ENCODE measurements at regions of chr14 and their contacts with region 1.

Region 1: DNA sequence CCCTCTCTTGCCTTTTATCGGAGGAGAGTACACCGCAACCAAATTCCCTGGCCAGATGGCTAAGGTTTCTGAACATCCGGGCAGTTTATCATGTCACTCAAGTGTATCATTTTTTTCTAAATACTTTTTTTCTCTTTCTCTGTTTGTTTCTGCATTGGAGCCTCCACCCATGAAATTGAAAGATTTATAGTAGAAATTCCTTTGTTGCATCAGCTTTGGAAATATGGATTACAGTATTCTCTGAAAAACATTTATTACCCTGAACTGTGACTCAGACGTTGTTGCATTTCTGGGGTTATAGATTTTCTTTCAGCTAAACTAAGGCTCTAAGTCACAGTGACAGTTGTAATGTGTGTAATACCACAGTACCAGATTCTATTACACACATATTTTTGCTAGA is 187.0 kb downstream of the SPTSSA start:
- DNase-seq: no peak
- ATAC-seq: no peak
- H3K4me3 ChIP-seq: no peak overlapping the region
- H3K27ac ChIP-seq: no peak overlapping the region
- H3K4me1 ChIP-seq: no peaks in the 10 kb centered on the region
- H3K27me3 ChIP-seq: no peaks in the 10 kb centered on the region
- CTCF ChIP-seq: no peak
- POLR2A ChIP-seq: no peak

Region 2: GRCh38 chr14:34161351-34162082 is 113.6 kb before region 1 on chr14:
- in situ Hi-C with region 1: no loop called
- intact Hi-C with region 1: no loop called
- DNase-seq: no peak
- ATAC-seq: no peak
- H3K4me3 ChIP-seq: no peak overlapping the region
- H3K27ac ChIP-seq: no peak overlapping the region
- H3K4me1 ChIP-seq: no peaks in the 10 kb centered on the region
- H3K27me3 ChIP-seq: no peaks in the 10 kb centered on the region
- CTCF ChIP-seq: no peak
- POLR2A ChIP-seq: no peak

Region 3: DNA sequence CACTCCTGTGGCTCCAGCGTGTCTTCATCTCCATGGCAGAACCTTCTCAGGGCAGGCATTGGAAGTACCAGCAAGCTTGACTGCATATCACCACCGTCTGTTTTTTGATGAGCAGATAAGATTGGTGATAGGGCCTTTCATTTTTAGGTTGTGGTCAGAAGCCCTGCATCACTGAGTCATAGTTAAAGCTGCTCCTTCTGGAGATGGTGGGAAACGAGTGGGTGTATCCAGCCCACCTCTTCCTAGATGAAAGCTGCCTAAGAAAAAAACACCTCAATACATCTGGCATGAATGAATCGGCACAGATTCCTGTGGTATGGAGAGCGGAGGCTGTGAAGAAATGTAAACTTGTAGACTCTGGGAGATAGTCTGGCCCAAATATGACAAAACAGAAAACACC is 75.5 kb before region 1 on chr14:
- in situ Hi-C with region 1: no loop called
- intact Hi-C with region 1: no loop called
- DNase-seq: no peak
- ATAC-seq: no peak
- H3K4me3 ChIP-seq: no peak overlapping the region
- H3K27ac ChIP-seq: no peak overlapping the region
- H3K4me1 ChIP-seq: no peaks in the 10 kb centered on the region
- H3K27me3 ChIP-seq: no peaks in the 10 kb centered on the region
- CTCF ChIP-seq: no peak
- POLR2A ChIP-seq: no peak

Region 4: DNA sequence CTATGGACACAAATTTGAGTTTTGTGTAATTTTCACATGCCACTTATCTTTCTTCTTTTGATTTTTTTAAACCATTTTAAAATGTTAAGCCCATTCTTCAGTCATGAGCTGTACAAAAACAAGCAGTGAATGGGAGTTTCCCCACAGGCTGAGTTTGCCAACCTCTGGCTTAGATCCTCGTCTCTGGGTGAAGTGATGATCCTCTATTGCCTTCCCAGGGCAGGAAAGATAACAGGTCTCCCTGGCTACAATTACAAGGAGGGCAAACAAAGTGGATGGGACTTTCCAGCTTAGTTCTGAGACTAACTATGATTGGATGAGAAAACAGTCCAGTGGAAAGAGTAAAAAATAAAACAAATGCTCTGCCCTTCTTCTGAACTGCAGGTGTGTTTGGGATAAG is 16.8 kb before region 1 on chr14:
- in situ Hi-C with region 1: no loop called
- intact Hi-C with region 1: loop called (anchors 1 kb)
- DNase-seq: no peak
- ATAC-seq: no peak
- H3K4me3 ChIP-seq: no peak overlapping the region
- H3K27ac ChIP-seq: no peak overlapping the region
- H3K4me1 ChIP-seq: no peaks in the 10 kb centered on the region
- H3K27me3 ChIP-seq: no peaks in the 10 kb centered on the region
- CTCF ChIP-seq: no peak
- POLR2A ChIP-seq: no peak